ENCODE measurements at regions of chr15 and their contacts with region 1.

Region 1: DNA sequence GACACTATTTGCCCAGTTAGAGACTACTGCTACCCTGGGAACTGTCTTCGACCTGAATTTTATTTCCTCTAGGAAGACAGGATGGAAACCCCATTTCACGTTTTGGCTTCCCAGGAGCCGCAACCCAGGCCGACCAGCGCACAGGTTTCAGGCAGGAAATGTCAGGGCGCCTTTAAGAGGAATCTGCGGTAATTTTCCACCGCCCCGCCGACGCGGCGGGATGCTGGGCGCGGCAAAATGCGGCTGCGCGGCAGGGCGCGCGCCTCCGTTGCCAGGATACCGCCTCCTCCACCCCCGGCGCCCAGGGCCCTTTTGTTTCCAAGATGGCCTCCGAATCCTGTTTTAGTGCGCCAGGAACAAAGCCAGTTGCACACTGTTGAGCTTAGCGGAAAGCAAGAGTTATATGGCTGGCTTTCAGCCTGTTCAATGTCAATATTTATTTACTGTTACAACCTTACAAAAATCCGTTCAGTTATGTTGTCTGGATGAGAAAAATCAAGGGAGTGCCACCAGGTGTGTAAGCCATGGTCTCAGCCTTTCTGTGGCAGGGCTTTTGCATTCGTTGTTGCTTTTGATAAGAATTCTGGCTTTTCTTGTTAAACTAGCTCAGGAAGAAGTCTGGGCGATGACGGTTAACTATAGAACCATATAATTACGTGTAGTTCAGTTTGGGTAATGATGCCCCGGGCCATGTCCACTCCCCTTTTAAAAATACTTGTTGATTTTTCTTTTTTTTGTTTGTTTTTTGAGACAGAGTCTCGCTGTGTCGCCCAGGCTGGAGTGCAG is 79.7 kb upstream of the CHD2 start:
- DNase-seq: peak; percentile 91
- H3K4me3 Mint-ChIP-seq: peak overlapping the region; percentile 72
- H3K27ac Mint-ChIP-seq: peak overlapping the region; percentile 98
- H3K4me1 Mint-ChIP-seq: peaks cover 25% of the 10 kb centered on the region
- H3K27me3 Mint-ChIP-seq: no peaks in the 10 kb centered on the region
- CTCF ChIP-seq: no peak

Region 2: GRCh38 chr15:92763459-92763858 is 57.0 kb before region 1 on chr15:
- CTCF ChIA-PET with region 1: no interaction called
- POLR2A ChIA-PET with region 1: no interaction called
- intact Hi-C with region 1: no loop called
- DNase-seq: no peak
- H3K4me3 Mint-ChIP-seq: no peak overlapping the region
- H3K27ac Mint-ChIP-seq: no peak overlapping the region
- H3K4me1 Mint-ChIP-seq: no peaks in the 10 kb centered on the region
- H3K27me3 Mint-ChIP-seq: no peaks in the 10 kb centered on the region
- CTCF ChIP-seq: no peak

Region 3: DNA sequence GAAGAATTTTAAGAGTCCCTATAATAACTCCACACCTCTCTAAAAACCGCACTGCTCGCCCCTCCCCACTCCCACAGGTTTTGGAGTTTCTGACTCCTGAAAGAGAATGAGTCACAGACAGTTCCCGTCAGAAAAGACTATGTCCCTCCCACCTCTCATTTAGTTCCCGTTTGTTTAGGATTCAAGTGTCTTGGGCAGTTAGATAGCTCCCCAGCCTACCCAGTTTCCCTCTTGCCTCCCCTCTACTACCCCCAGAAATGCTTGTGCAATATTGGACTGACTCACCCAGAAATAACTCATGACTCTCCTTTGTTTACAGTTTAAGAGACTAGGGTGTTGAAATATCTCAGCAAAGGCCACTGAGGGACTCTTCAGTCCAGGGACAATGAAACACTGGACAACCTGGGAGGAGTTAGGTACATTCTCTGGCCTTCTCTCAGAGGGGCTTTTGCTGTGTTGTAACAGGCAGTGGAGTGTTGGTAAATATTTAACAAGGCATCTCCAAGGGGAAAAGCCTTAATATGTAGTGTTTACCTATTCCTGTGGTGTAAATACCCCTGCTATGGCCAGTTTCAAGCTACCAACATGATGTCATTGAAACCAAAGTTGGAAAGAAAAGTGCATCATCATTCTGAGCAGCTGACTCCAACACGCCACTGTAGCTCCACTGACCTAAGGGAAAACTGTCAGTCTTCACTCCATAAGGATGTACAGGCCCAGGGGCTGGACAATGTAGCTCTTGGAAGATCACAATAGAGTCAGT is 16.4 kb before region 1 on chr15:
- CTCF ChIA-PET with region 1: interaction called, 14 read pairs
- POLR2A ChIA-PET with region 1: interaction called, 280 read pairs
- intact Hi-C with region 1: no loop called
- DNase-seq: peak; percentile 100
- H3K4me3 Mint-ChIP-seq: peak overlapping the region; percentile 1
- H3K27ac Mint-ChIP-seq: peak overlapping the region; percentile 98
- H3K4me1 Mint-ChIP-seq: peaks cover 34% of the 10 kb centered on the region
- H3K27me3 Mint-ChIP-seq: no peaks in the 10 kb centered on the region
- CTCF ChIP-seq: no peak

Region 4: GRCh38 chr15:92868992-92869988 is 48.9 kb after region 1 on chr15:
- CTCF ChIA-PET with region 1: no interaction called
- POLR2A ChIA-PET with region 1: interaction called, 68 read pairs
- intact Hi-C with region 1: no loop called
- DNase-seq: peak; percentile 81
- H3K4me3 Mint-ChIP-seq: peak overlapping the region; percentile 48
- H3K27ac Mint-ChIP-seq: peak overlapping the region; percentile 80
- H3K4me1 Mint-ChIP-seq: peaks cover 24% of the 10 kb centered on the region
- H3K27me3 Mint-ChIP-seq: no peaks in the 10 kb centered on the region
- CTCF ChIP-seq: no peak

Region 5: DNA sequence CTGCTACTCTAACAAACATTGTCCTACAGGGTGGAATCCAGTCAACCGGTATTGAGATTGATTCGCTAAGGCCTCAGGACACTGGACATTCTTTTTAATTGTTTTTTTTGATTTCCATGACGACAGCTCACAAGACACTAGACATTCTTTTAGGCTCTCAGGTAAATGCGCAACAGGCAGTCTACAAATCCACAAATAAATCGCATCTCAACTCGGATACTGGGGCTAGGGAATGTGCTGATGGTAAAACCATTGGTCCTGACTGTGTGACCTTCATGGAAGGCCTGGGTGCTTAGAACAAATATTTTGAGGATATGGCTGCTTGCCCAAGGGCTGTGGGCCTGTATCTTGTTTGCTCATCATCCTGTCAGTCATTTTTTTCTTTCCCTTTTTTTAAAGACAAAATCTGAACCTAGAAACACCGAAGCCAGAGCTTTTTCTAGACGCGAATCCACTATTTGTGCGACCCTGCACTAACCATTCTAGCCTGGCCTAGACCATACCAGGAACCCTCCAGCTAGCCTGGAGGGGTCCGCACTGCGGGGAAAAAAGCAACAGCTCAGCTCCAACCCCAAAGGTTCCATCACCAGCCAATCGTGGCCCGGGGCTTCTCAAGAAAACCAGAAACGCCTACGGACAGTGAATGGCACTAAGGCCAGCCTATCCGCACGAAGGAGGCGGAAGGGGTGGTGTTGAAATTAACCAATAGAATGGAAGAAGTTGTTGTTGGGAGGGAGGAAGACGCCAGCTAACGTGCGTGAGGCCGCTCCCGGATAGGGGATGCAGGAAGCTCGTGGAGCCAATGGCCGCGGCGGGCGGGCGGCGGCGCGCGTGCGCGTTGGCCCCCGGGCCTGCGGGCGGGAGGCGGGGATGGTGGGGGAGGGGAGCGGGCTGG is 61.6 kb after region 1 on chr15:
- CTCF ChIA-PET with region 1: interaction called, 9 read pairs
- POLR2A ChIA-PET with region 1: interaction called, 357 read pairs
- intact Hi-C with region 1: loop called (anchors 2 kb)
- DNase-seq: peak; percentile 99
- H3K4me3 Mint-ChIP-seq: peak overlapping the region; percentile 87
- H3K27ac Mint-ChIP-seq: peak overlapping the region; percentile 98
- H3K4me1 Mint-ChIP-seq: peaks cover 28% of the 10 kb centered on the region
- H3K27me3 Mint-ChIP-seq: no peaks in the 10 kb centered on the region
- CTCF ChIP-seq: no peak

Region 6: GRCh38 chr15:92896561-92896960 is 76.1 kb after region 1 on chr15:
- CTCF ChIA-PET with region 1: interaction called, 4 read pairs
- POLR2A ChIA-PET with region 1: interaction called, 128 read pairs
- intact Hi-C with region 1: no loop called
- DNase-seq: no peak
- H3K4me3 Mint-ChIP-seq: no peak overlapping the region
- H3K27ac Mint-ChIP-seq: peak overlapping the region; percentile 57
- H3K4me1 Mint-ChIP-seq: peaks cover 24% of the 10 kb centered on the region
- H3K27me3 Mint-ChIP-seq: no peaks in the 10 kb centered on the region
- CTCF ChIP-seq: no peak